Breast epithelium (tissue), 4 donors: ENCODE measurements at regions of chrX and their contacts with region 1.

Region 1: DNA sequence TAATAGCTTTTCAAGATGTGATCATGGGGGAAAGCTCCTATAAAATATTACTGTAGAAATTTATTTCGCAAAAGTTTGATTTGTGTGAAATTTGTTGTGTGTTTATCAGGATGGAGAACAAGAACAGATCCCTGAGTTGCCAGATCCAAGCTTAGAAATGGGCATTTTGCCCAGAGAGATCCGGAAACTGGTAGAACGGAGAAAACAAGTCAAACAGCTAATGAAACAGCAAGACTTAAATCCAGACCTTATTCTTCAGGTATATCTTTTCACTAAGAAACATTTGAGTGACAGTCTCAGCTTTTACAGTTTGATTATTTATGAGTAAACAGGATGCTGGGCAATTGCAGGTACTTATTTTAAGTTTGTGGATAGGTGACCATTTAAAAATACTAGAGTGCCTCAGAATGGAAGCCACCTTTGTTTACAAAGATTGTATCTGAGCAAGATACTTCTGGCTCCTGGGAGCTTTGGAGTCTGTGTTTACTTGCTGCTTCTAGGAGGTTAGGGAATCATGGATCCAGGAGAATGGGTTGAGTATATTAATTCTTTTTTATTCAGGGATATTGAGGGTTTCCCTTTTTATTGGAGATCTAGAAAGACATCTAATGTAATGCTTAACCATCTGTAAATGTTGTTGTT is 54.6 kb downstream of the POLA1 start:
- DNase-seq: no peak
- H3K4me3 ChIP-seq: no peak overlapping the region
- H3K27ac ChIP-seq: no peak overlapping the region
- H3K4me1 ChIP-seq: no peaks in the 10 kb centered on the region
- H3K27me3 ChIP-seq: peaks cover 0 to 25% of the 10 kb centered on the region in 2 donors
- CTCF ChIP-seq: no peak
- POLR2A ChIP-seq: no peak

Region 2: GRCh38 chrX:24515447-24515846 is 232.9 kb before region 1 on chrX:
- intact Hi-C with region 1: loop called (anchors 5 kb)
- DNase-seq: no peak
- H3K4me3 ChIP-seq: no peak overlapping the region
- H3K27ac ChIP-seq: no peak overlapping the region
- H3K4me1 ChIP-seq: no peaks in the 10 kb centered on the region
- H3K27me3 ChIP-seq: peaks cover 0 to 21% of the 10 kb centered on the region in 2 donors
- CTCF ChIP-seq: no peak
- POLR2A ChIP-seq: no peak

Region 3: GRCh38 chrX:24607616-24608015 is 140.7 kb before region 1 on chrX:
- intact Hi-C with region 1: no loop called
- DNase-seq: no peak
- H3K4me3 ChIP-seq: no peak overlapping the region
- H3K27ac ChIP-seq: no peak overlapping the region
- H3K4me1 ChIP-seq: no peaks in the 10 kb centered on the region
- H3K27me3 ChIP-seq: peaks cover 0 to 33% of the 10 kb centered on the region in 2 donors
- CTCF ChIP-seq: no peak
- POLR2A ChIP-seq: no peak

Region 4: DNA sequence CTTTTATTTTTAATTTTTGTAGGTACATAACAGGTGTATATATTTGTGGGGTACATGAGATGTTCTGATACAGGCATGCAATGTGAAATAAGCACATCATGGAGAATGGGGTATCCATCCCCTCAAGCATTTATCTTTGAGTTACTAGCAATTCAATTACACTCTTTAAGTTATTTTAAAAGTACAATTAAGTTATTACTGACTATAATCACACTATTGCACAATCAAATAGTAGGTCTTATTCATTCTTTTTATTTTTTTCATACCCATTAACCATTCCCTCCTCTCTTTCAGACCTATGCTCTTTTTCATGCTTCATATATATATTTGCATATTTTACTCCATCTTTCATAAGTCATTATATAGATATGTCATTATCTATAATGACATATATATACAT is 1560.9 kb after region 1 on chrX:
- intact Hi-C with region 1: no loop called
- DNase-seq: no peak
- H3K4me3 ChIP-seq: no peak overlapping the region
- H3K27ac ChIP-seq: no peak overlapping the region
- H3K4me1 ChIP-seq: no peaks in the 10 kb centered on the region
- H3K27me3 ChIP-seq: peaks cover 0 to 7% of the 10 kb centered on the region in 2 donors
- CTCF ChIP-seq: no peak
- POLR2A ChIP-seq: no peak